Dendritic cell treated with granulocyte-macrophage colony-stimulating factor and Interleukin-4, amounts not matched to agents 40 ng/mL and 50 ng/mL, for 4 days (primary cell): ENCODE measurements at regions of chr2 and their contacts with region 1.

Region 1: DNA sequence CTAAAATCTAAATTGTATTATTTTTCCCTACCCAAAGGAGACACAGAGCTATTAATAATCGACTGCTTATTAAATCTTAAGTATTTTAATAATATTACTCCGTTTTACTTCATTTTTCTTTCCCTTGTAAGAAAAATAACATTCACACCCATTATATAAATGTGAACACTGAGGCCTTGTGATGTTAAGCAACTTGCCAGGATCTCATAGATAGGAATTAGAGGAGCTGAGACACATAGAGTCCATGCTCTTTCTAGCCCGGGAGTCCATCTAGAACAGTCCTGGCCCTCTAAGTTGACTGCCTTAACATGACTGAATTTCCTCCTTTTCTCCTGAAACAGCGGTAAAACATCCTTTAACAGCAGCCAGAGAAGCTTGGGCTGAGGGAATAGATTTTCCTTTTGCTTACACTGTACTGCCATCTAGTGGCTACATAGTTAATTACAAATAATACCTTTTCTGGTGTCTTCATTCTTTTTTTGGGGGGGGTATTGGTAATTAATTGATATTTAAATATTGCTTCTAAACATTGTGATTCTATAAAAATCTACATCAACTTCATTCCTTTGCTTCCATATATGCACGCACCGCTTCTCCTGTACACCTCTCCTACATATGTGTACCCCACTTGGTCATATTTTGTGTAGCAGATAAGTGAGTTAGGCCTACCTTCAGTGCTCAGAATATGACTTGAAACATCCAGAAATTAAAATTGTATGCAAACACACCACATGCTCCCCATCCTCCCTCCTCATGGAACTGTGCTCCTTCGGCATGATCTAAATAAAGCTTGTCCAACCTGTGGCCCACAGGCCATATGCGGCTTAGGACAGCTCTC is 125.8 kb upstream of the HNMT start:
- H3K4me3 Mint-ChIP-seq: no peak overlapping the region
- H3K27ac Mint-ChIP-seq: no peak overlapping the region
- H3K4me1 Mint-ChIP-seq: no peaks in the 10 kb centered on the region
- H3K27me3 Mint-ChIP-seq: no peaks in the 10 kb centered on the region

Region 2: GRCh38 chr2:136423516-136423996 is 1414.9 kb before region 1 on chr2:
- intact Hi-C with region 1: loop called (anchors 2 kb)
- H3K4me3 Mint-ChIP-seq: peak overlapping the region; percentile 77
- H3K27ac Mint-ChIP-seq: no peak overlapping the region
- H3K4me1 Mint-ChIP-seq: peaks cover 10% of the 10 kb centered on the region
- H3K27me3 Mint-ChIP-seq: peaks cover 61% of the 10 kb centered on the region

Region 3: DNA sequence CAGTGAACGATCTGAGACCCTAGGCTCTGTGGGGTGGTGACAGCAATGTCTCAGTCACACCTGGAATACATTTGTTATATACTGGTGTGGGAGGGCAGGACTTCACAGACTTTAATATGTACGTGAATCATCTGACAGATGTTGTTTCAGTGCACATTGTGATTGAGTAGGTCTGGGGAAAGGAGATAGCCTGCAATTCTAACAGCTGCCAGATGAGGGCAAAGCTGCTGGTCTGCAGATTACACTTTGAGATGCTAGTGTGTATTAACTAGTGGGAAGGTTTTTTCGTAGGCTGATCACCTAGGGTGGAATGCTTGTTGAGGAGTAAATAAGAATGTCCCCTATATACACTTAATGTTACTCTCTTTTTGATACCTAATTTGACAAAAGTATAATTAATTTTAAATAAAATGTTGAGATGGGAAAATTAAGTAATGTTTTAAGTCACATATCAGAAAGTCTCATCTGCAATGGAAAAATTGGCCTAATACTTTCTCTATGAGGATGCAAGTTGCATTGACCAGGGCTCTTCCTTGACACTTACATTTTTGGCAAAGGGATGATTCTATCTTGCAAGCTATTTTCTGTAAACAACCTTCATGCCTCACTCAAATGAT is 371.1 kb before region 1 on chr2:
- intact Hi-C with region 1: loop called (anchors 5 kb)
- H3K4me3 Mint-ChIP-seq: no peak overlapping the region
- H3K27ac Mint-ChIP-seq: no peak overlapping the region
- H3K4me1 Mint-ChIP-seq: no peaks in the 10 kb centered on the region
- H3K27me3 Mint-ChIP-seq: no peaks in the 10 kb centered on the region